ENCODE measurements at regions of chr3 and their contacts with region 1.

Region 1: GRCh38 chr3:112990672-112991602 is at the start of gene GTPBP8:
- DNase-seq: peak; percentile 86 to 87
- ATAC-seq: peak; percentile 98
- H3K4me3 ChIP-seq: peak within 1 kb of the TSS; percentile 82 to 89 (median 88)
- H3K27ac ChIP-seq: peak within 1 kb of the TSS; percentile 92 to 97 (median 94)
- H3K4me1 ChIP-seq: peaks cover 20 to 21% of the 10 kb centered on the region in 2 donors
- H3K27me3 ChIP-seq: no peaks in the 10 kb centered on the region
- CTCF ChIP-seq: peak in 3 of 5 experiments; percentile 15 to 28 (median 22)
- POLR2A ChIP-seq: peak; percentile 71 to 86
- total RNA-seq, gene GTPBP8: 21.4 to 78.3 (median 40.7) TPM

Region 2: DNA sequence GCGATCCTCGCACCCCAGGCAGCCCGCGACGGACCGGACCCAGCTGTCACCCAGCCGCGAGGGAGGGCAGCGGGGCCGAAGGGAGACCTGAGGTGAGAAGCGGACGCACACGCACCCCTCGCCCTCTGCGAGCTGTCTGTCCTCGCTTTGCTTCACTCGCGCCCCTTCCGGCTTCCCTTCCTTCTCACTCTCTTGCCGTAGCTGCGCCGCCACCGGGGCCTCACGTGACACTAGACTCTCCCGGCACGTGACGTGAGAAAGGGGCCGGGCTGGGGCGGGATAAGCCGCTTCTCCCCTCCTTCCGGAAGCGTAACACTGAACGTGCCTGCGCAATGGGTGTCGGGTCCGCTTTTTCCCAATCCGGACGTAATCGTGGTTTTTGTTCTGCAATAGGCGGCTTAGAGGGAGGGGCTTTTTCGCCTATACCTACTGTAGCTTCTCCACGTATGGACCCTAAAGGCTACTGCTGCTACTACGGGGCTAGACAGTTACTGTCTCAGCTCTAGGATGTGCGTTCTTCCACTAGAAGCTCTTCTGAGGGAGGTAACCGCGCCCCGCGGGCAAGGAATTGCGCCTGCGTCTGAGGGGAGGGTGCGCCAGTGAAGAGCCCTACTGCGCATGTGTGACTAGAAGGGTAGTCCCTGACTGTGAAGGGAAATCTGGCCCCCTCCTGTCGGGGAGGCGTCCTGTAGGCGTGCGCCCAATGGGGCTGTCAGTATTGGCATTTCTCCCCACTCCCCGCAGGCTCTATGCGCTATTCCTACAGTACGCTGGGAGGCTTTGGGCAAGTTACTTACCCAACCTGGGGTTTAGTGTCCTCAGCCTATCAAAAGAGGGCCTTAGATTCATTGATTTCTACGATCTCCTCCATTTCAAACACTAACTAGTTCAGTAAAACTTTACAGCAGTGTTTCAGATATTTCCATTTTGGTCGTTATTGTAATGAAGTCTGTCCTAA is 428.9 kb before region 1 on chr3 and contains the starts of genes ATG3 and SLC35A5:
- in situ Hi-C with region 1: no loop called
- intact Hi-C with region 1: loop called (anchors 2 kb)
- DNase-seq: peak; percentile 96 to 98
- ATAC-seq: peak; percentile 95
- H3K4me3 ChIP-seq: peak within 1 kb of the TSS; percentile 71 to 93 (median 88)
- H3K27ac ChIP-seq: peak within 1 kb of the TSS; percentile 92 to 97 (median 94)
- H3K4me1 ChIP-seq: peaks cover 25 to 36% of the 10 kb centered on the region in 2 donors
- H3K27me3 ChIP-seq: no peaks in the 10 kb centered on the region
- CTCF ChIP-seq: peak in 3 of 5 experiments; percentile 18 to 38 (median 35)
- POLR2A ChIP-seq: peak; percentile 69 to 79
- total RNA-seq, gene ATG3: 34.2 to 61.9 (median 50.7) TPM
- total RNA-seq, gene SLC35A5: 5.0 to 15.3 (median 9.5) TPM

Region 3: DNA sequence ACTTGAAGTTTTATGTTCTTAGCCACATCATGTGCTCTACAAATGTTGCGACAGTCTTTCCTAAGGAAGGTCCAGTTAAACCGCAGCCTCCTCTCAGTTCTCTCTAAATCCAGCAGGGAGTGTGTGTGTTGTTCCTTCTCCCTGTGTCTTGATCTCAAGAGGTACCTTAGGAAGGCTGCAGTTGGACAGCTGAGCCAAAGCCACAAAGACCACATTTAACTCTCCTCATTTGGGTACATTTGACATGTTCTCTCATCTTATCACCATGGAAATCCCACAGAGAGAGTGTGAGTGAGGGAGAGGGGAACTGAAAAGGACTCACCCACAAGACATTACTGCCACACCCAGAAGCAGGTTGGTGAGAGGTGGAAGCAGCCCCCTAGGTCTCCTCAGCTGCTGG is 223.8 kb before region 1 on chr3:
- in situ Hi-C with region 1: no loop called
- intact Hi-C with region 1: no loop called
- DNase-seq: no peak
- ATAC-seq: no peak
- H3K4me3 ChIP-seq: no peak overlapping the region
- H3K27ac ChIP-seq: no peak overlapping the region
- H3K4me1 ChIP-seq: no peaks in the 10 kb centered on the region
- H3K27me3 ChIP-seq: no peaks in the 10 kb centered on the region
- CTCF ChIP-seq: no peak
- POLR2A ChIP-seq: no peak

Region 4: DNA sequence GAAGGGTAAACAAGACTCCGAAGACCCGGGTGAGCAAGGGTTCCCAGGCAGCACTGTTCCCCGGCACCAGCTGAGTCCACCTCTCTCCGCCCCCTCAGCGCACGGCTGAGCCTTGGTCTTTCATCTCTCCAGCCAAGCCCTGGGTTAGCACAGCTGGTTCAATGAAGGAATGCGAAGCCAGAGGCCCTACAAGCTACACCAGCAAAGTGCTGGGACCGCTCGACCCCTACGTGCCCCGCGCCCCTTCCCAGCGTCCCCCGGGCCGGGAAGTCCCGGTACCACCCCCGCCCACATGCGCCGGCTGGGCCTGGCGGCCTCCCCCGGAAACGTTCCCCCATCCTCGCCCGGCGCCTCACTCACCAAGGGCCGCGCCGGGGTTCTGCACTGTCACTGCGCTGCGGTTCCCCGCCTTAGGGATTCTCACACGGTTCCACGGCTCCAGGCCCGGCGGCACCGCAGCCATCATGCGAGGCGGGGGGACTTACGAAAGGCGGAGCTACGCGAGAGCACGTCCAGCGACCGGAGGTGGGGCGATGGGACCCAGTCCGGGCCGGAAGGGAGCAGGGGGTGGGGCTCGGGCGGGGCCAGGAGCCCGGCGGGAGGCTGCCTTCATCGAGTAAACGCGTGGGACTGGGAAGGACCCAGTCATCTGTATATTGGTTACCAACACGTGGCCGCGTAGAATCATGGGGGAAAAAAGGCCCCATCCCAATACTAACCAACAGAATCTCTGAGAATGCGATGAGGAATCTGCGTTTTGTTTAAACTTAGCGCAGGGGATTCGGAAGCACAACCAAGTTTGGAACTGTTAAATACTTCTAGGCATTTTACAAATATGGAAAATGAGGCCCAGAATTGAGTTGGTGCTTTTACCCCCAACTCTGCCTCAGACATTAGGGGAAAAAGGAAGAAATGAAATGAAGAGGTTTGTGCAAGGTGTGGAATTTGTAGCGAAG is 28.5 kb after region 1 on chr3:
- in situ Hi-C with region 1: no loop called
- intact Hi-C with region 1: loop called (anchors 1 kb)
- DNase-seq: peak; percentile 82 to 87
- ATAC-seq: peak; percentile 93 to 94
- H3K4me3 ChIP-seq: peak overlapping the region; percentile 80 to 94 (median 90)
- H3K27ac ChIP-seq: peak overlapping the region; percentile 92 to 97 (median 94)
- H3K4me1 ChIP-seq: peaks cover 12 to 16% of the 10 kb centered on the region in 2 donors
- H3K27me3 ChIP-seq: no peaks in the 10 kb centered on the region
- CTCF ChIP-seq: no peak
- POLR2A ChIP-seq: peak; percentile 51 to 65